HEK293 (cell line): ENCODE measurements at regions of chr9 and their contacts with region 1.

Region 1: GRCh38 chr9:33452828-33453271 is 5.5 kb upstream of the AQP3 start:
- H3K4me3 ChIP-seq: no peak overlapping the region
- H3K27ac ChIP-seq: no peak overlapping the region
- H3K4me1 ChIP-seq: no peaks in the 10 kb centered on the region
- CTCF ChIP-seq: 0 out of 2 replicates have a peak, but pooled peaks have one; percentile 33

Region 2: GRCh38 chr9:33404788-33405362 is 48.0 kb before region 1 on chr9:
- CTCF ChIA-PET with region 1: interaction called, 66 read pairs
- POLR2A ChIA-PET with region 1: interaction called, 3 read pairs
- H3K4me3 ChIP-seq: no peak overlapping the region
- H3K27ac ChIP-seq: no peak overlapping the region
- H3K4me1 ChIP-seq: no peaks in the 10 kb centered on the region
- CTCF ChIP-seq: no peak

Region 3: GRCh38 chr9:33430942-33431341 is 21.9 kb before region 1 on chr9:
- CTCF ChIA-PET with region 1: interaction called, 38 read pairs
- POLR2A ChIA-PET with region 1: no interaction called
- H3K4me3 ChIP-seq: no peak overlapping the region
- H3K27ac ChIP-seq: no peak overlapping the region
- H3K4me1 ChIP-seq: no peaks in the 10 kb centered on the region
- CTCF ChIP-seq: no peak

Region 4: GRCh38 chr9:33436440-33436839 is 16.4 kb before region 1 on chr9:
- CTCF ChIA-PET with region 1: interaction called, 55 read pairs
- POLR2A ChIA-PET with region 1: no interaction called
- H3K4me3 ChIP-seq: no peak overlapping the region
- H3K27ac ChIP-seq: no peak overlapping the region
- H3K4me1 ChIP-seq: no peaks in the 10 kb centered on the region
- CTCF ChIP-seq: no peak

Region 5: DNA sequence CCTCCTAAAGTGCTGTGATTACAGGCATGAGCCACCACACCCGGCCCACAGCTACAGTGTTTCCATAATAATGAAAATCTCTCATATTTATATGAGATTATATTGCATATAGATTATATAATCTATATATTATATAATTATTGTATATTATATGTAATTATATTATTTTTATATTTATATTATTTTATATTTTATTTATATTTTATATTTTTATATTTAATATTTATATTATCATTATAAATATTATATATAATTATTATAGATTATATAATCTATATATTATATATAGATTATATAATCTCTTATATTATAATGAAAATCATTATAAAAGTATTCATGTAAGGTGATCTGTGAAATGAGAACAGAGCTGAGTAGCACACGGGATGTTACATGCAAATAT is 82.7 kb after region 1 on chr9:
- CTCF ChIA-PET with region 1: no interaction called
- POLR2A ChIA-PET with region 1: no interaction called
- H3K4me3 ChIP-seq: no peak overlapping the region
- H3K27ac ChIP-seq: no peak overlapping the region
- H3K4me1 ChIP-seq: no peaks in the 10 kb centered on the region
- CTCF ChIP-seq: no peak